Activated T-helper 2 cell treated with anti-CD3 and anti-CD28 coated beads, Interferon-gamma antibody, Interleukin-2, Interleukin-4, amounts not matched to agents 10 μg/mL and 5 μg/mL and 100 μg/mL, durations not matched to agents 14 hours and 24 hours and 36 hours (primary cell): ENCODE measurements at regions of chrX and their contacts with region 1.

Region 1: GRCh38 chrX:49191033-49191871 is 5.1 kb upstream of the PRICKLE3 start:
- DNase-seq: peak; percentile 87
- H3K4me3 Mint-ChIP-seq: peak overlapping the region; percentile 96
- H3K27ac Mint-ChIP-seq: peak overlapping the region; percentile 93
- H3K4me1 Mint-ChIP-seq: peaks cover 31% of the 10 kb centered on the region
- H3K27me3 Mint-ChIP-seq: no peaks in the 10 kb centered on the region

Region 2: DNA sequence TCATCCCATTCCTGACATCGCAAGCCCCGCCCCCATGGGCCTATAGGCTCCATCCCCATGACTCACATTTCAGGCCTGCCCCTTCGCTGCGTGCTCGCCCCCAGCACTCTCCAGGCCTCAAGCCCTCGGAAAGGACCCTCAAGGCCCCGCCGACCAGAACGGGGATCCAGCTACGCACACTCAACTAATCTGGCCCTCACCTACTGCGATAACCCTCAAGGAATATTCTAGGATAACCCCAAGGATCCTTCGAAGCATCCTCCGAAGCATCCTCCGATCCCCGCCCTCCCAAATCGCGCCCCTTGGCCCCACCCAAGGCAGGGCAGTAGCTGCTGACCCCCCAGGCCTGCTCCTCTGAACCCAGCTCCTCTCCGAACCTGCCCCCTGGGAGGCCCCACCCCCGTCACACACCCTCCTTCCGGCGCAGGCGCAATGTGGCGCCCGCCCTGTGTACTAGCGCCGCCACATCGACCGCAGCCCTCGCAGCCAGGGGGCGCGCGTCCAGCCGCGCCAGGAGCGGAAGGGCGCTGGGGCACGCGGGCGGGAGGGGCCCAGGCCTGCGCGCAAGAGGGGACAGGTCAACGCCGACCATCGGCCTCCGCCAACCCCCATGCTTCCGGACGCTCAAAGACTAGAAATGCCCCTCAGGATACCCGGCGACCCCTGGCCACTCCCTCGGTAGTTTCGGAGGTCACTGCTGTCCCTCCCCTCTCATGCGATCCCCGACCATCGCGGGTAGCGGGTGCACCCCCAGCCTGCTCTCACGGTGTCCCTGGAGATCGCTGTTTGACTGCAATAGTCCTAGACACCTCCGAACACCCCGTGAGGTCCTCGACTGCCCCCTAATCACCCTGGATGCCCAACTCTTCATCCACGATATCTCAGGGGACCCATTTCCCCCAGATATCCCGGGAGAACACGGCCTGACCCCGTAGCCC is 35.1 kb before region 1 on chrX:
- intact Hi-C with region 1: loop called (anchors 5 kb)
- DNase-seq: peak; percentile 82
- H3K4me3 Mint-ChIP-seq: peak overlapping the region; percentile 83
- H3K27ac Mint-ChIP-seq: peak overlapping the region; percentile 92
- H3K4me1 Mint-ChIP-seq: peaks cover 11% of the 10 kb centered on the region
- H3K27me3 Mint-ChIP-seq: no peaks in the 10 kb centered on the region

Region 3: DNA sequence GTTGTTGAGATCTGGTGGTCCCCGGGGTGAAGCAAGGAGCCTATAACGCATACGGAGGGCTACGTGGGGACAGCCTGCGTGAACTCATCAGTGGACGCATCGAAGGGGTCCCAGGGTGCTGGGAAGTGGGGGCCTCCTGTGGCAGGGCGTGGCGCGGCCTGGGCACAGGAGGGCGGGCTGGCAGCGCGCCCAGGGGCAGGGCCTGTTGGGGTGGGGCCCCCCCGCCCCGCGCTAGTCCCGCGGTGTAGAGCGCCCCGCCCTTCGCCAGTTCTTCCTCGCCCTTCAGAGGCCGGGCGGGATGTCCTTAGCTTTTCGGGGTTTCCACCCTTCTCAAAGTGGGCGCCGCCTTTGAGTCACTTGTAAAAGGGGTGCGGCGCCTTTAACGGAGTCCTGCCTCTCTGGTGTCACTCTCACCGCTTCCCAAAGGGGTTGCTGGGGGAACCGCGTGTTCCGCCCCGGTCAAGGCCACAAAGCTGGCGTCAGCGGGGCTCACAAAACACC is 18.9 kb before region 1 on chrX:
- intact Hi-C with region 1: loop called (anchors 2 kb)
- DNase-seq: peak; percentile 69
- H3K4me3 Mint-ChIP-seq: peak overlapping the region; percentile 86
- H3K27ac Mint-ChIP-seq: peak overlapping the region; percentile 84
- H3K4me1 Mint-ChIP-seq: peaks cover 20% of the 10 kb centered on the region
- H3K27me3 Mint-ChIP-seq: no peaks in the 10 kb centered on the region

Region 4: GRCh38 chrX:49237060-49237459 is 45.8 kb after region 1 on chrX:
- intact Hi-C with region 1: loop called (anchors 5 kb)
- DNase-seq: no peak
- H3K4me3 Mint-ChIP-seq: peak overlapping the region; percentile 74
- H3K27ac Mint-ChIP-seq: peak overlapping the region; percentile 79
- H3K4me1 Mint-ChIP-seq: peaks cover 20% of the 10 kb centered on the region
- H3K27me3 Mint-ChIP-seq: no peaks in the 10 kb centered on the region

Region 5: GRCh38 chrX:49269010-49269767 is 77.9 kb after region 1 on chrX:
- intact Hi-C with region 1: loop called (anchors 2 kb)
- DNase-seq: peak; percentile 92
- H3K4me3 Mint-ChIP-seq: peak overlapping the region; percentile 87
- H3K27ac Mint-ChIP-seq: peak overlapping the region; percentile 98
- H3K4me1 Mint-ChIP-seq: peaks cover 43% of the 10 kb centered on the region
- H3K27me3 Mint-ChIP-seq: no peaks in the 10 kb centered on the region

Region 6: GRCh38 chrX:49754233-49754857 is 563.1 kb after region 1 on chrX:
- intact Hi-C with region 1: loop called (anchors 2 kb)
- DNase-seq: peak; percentile 12
- H3K4me3 Mint-ChIP-seq: no peak overlapping the region
- H3K27ac Mint-ChIP-seq: no peak overlapping the region
- H3K4me1 Mint-ChIP-seq: peaks cover 2% of the 10 kb centered on the region
- H3K27me3 Mint-ChIP-seq: peaks cover 16% of the 10 kb centered on the region